Heart right ventricle (tissue), 16 donors: ENCODE measurements at regions of chr3 and their contacts with region 1.

Region 1: DNA sequence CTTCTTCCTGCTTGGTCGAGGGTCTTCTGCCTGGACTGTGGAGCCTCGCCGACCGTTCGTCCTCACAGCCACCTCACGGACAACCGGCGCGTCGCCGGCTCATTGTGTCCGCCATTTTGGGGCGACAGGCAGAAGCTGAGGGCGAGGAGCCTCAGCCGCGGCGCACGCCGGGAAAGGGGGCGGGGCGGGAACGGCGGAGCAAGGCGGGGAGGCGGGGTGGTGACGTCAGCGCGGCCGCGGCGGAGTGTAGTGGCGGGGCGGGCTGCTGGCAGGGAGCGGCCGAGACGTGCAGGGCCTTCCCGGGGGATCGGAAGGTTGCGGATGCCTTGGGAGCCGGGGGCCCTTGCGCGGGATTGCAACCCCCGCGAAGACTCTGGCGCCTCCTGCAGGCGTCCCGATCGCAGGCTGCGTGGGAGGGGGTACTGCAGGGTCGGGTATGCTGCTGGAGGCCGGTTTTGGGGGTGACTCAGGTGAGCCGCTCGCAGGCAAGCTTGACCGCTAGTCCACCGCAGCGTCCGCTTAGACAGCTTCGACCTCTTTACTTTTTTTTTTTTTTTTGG is at the start of gene WDR82:
- DNase-seq: peak; percentile 97 to 99
- ATAC-seq: peak; percentile 95 to 97 (median 97)
- H3K4me3 ChIP-seq: peak within 1 kb of the TSS; percentile 58 to 95 (median 87)
- H3K27ac ChIP-seq: peak within 1 kb of the TSS; percentile 91 to 100 (median 97)
- H3K4me1 ChIP-seq: peaks cover 3 to 73% (median 57%) of the 10 kb centered on the region in 9 donors
- H3K27me3 ChIP-seq: no peaks in the 10 kb centered on the region
- CTCF ChIP-seq: peak in 8 of 9 donors; percentile 27 to 74 (median 63)
- total RNA-seq, gene WDR82: 59.0 to 78.4 (median 71.6) TPM

Region 2: DNA sequence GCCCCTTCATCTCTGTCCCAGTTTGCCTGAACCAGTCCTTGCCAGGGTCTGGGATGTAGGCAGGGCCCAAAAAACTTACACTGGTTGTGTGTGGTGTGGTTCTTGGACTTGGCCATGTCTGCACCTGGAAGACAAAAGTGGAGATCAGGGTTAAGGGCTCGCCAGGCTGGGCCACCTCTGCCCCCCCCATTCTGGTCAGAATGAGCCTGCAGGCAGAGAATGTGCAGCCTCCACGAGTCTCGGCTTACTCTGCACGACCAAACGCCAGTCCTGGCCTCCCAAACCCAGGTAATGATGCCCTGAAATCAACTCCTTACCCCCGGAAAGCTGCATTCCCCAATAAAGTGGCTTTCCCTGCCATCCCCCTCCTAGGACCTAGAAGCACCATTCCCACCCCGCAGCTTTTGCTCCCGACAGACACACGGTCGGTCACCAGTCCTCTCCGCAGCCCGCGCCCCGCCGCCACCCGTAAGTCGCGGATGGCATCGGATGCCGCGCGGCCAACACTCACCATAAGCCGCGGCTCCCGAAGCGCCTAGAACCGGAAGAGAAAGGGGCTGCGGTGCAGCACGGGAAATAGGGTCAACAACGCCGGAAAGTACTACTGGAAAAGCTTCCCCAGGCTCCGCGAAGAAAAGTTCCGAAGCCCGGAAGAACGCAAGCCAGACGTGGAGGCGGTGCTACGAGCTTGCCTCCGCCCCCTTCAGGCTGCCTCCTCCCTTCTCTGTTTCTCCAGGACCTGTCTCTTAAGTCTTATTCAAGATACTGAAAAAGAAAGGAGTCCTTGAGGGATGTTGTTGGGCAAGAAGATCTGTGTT is 283.0 kb before region 1 on chr3 and contains the start of gene RPL29:
- intact Hi-C with region 1: loop called in 1 of 10 experiments (anchors 10 kb)
- DNase-seq: peak; percentile 86 to 94
- ATAC-seq: peak; percentile 89 to 97 (median 95)
- H3K4me3 ChIP-seq: peak within 1 kb of the TSS; percentile 64 to 94 (median 84)
- H3K27ac ChIP-seq: peak within 1 kb of the TSS; percentile 63 to 95 (median 86)
- H3K4me1 ChIP-seq: peaks cover 5 to 26% (median 22%) of the 10 kb centered on the region in 9 donors
- H3K27me3 ChIP-seq: no peaks in the 10 kb centered on the region
- CTCF ChIP-seq: peak in 8 of 9 donors; percentile 6 to 50 (median 34)
- total RNA-seq, gene RPL29: 505 to 754 (median 626) TPM

Region 3: GRCh38 chr3:52231502-52232293 is 46.9 kb before region 1 on chr3:
- intact Hi-C with region 1: loop called in 7 of 10 experiments (anchors 2 to 5 kb)
- DNase-seq: peak; percentile 63 to 82
- ATAC-seq: peak in 6 of 8 donors; percentile 5 to 38 (median 20)
- H3K4me3 ChIP-seq: peak overlapping the region in 6 of 10 donors; percentile 5 to 49 (median 28)
- H3K27ac ChIP-seq: peak overlapping the region in 4 of 10 donors; percentile 25 to 93 (median 33)
- H3K4me1 ChIP-seq: peaks cover 12 to 51% (median 40%) of the 10 kb centered on the region in 9 donors
- H3K27me3 ChIP-seq: no peaks in the 10 kb centered on the region
- CTCF ChIP-seq: peak; percentile 80 to 98 (median 84)

Region 4: GRCh38 chr3:52623234-52623792 is 344.7 kb after region 1 on chr3:
- intact Hi-C with region 1: no loop called
- DNase-seq: no peak
- ATAC-seq: no peak
- H3K4me3 ChIP-seq: no peak overlapping the region
- H3K27ac ChIP-seq: no peak overlapping the region
- H3K4me1 ChIP-seq: no peaks in the 10 kb centered on the region
- H3K27me3 ChIP-seq: no peaks in the 10 kb centered on the region
- CTCF ChIP-seq: no peak